GM12878 (cell line): ENCODE measurements at regions of chr4 and their contacts with region 1.

Region 1: DNA sequence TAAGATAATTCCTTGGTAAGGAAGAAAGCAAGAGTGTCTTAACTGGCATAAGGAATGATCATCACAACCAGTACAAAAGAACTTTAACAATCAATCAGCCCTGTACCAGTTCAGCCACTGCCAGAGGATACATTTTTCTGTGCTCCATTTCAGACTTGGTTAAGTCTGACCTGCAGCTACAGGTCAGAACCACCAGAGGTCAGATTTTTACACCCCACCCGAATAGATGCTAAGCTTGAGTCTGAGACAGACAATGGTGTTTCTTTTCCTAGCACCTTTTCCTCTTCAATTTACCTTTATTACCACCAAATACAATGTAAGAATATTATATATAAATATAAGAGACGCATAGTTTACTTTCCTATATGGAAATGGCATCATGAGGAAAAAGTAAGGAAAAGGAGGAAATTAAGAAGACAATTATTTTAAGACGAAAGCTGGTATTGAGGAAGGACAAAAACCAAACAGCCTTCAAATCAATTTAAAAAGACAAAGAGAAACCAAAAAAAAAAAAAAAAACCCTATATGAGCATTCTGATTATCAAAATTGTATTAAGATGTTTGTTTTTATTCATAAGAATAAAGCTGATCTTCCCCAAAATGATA is 215.3 kb upstream of the TTC29 start:
- DNase-seq: no peak
- ATAC-seq: peak; percentile 89
- H3K4me3 ChIP-seq: no peak overlapping the region
- H3K27ac ChIP-seq: no peak overlapping the region
- H3K4me1 ChIP-seq: no peaks in the 10 kb centered on the region
- H3K27me3 ChIP-seq: peaks cover 0 to 7% of the 10 kb centered on the region in 2 experiments; a peak in 2 of 4 replicates
- CTCF ChIP-seq: peak; percentile 68 to 79 (median 71)
- EP300 ChIP-seq: no peak
- POLR2A ChIP-seq: no peak
- RAD21 ChIP-seq: peak; percentile 79

Region 2: GRCh38 chr4:147173322-147173721 is 12.3 kb after region 1 on chr4:
- CTCF ChIA-PET with region 1: interaction called, 23 read pairs
- POLR2A ChIA-PET with region 1: no interaction called
- RAD21 ChIA-PET with region 1: interaction called, 3 read pairs
- SMC1A ChIA-PET with region 1: interaction called, 3 read pairs
- in situ Hi-C with region 1: no loop called
- intact Hi-C with region 1: no loop called
- DNase-seq: no peak
- ATAC-seq: no peak
- H3K4me3 ChIP-seq: no peak overlapping the region
- H3K27ac ChIP-seq: no peak overlapping the region
- H3K4me1 ChIP-seq: no peaks in the 10 kb centered on the region
- H3K27me3 ChIP-seq: no peaks in the 10 kb centered on the region; a peak in 2 of 4 replicates
- CTCF ChIP-seq: no peak
- EP300 ChIP-seq: no peak
- POLR2A ChIP-seq: no peak
- RAD21 ChIP-seq: no peak

Region 3: GRCh38 chr4:147334478-147334877 is 173.5 kb after region 1 on chr4:
- CTCF ChIA-PET with region 1: no interaction called
- POLR2A ChIA-PET with region 1: no interaction called
- RAD21 ChIA-PET with region 1: no interaction called
- SMC1A ChIA-PET with region 1: no interaction called
- in situ Hi-C with region 1: no loop called
- intact Hi-C with region 1: no loop called
- DNase-seq: no peak
- ATAC-seq: no peak
- H3K4me3 ChIP-seq: no peak overlapping the region
- H3K27ac ChIP-seq: no peak overlapping the region
- H3K4me1 ChIP-seq: no peaks in the 10 kb centered on the region
- H3K27me3 ChIP-seq: no peaks in the 10 kb centered on the region
- CTCF ChIP-seq: no peak
- EP300 ChIP-seq: no peak
- POLR2A ChIP-seq: no peak
- RAD21 ChIP-seq: no peak

Region 4: GRCh38 chr4:147581601-147582350 is 420.8 kb after region 1 on chr4:
- CTCF ChIA-PET with region 1: interaction called, 61 read pairs
- POLR2A ChIA-PET with region 1: no interaction called
- RAD21 ChIA-PET with region 1: interaction called, 3 read pairs
- SMC1A ChIA-PET with region 1: no interaction called
- in situ Hi-C with region 1: loop called (anchors 5 kb)
- intact Hi-C with region 1: no loop called
- DNase-seq: no peak
- ATAC-seq: no peak
- H3K4me3 ChIP-seq: no peak overlapping the region
- H3K27ac ChIP-seq: no peak overlapping the region
- H3K4me1 ChIP-seq: peaks cover 7% of the 10 kb centered on the region
- H3K27me3 ChIP-seq: no peaks in the 10 kb centered on the region
- CTCF ChIP-seq: no peak
- EP300 ChIP-seq: no peak
- POLR2A ChIP-seq: no peak
- RAD21 ChIP-seq: no peak